ENCODE measurements at regions of chr1 and their contacts with region 1.

Region 1: GRCh38 chr1:42913426-42914091 is 45.1 kb downstream of the SLC2A1 start:
- DNase-seq: peak; percentile 76
- H3K4me3 Mint-ChIP-seq: no peak overlapping the region
- H3K27ac Mint-ChIP-seq: no peak overlapping the region
- H3K4me1 Mint-ChIP-seq: peaks cover 2% of the 10 kb centered on the region
- H3K27me3 Mint-ChIP-seq: no peaks in the 10 kb centered on the region

Region 2: DNA sequence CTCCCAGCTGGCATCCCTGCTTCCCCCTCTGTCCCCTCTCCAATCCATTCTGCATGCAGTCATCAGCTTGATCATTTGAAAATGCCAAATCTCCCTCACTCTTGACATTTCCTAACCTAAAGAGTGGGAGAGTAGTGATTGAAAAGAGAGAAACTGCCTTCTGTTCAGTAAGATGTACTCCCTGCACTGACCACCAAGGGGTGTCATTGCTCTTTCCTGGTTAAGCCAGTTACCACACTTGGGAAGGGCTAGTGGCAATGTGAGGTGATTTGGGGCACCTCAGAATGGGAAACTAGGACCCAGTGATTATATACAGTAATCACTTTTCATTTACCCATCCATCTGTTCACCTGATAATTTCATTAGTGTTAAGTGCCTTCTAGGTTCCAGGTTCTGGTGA is 135.7 kb before region 1 on chr1:
- CTCF ChIA-PET with region 1: interaction called, 13 read pairs
- intact Hi-C with region 1: loop called (anchors 1 kb)
- DNase-seq: peak; percentile 61
- H3K4me3 Mint-ChIP-seq: no peak overlapping the region
- H3K27ac Mint-ChIP-seq: no peak overlapping the region
- H3K4me1 Mint-ChIP-seq: peaks cover 6% of the 10 kb centered on the region
- H3K27me3 Mint-ChIP-seq: no peaks in the 10 kb centered on the region

Region 3: DNA sequence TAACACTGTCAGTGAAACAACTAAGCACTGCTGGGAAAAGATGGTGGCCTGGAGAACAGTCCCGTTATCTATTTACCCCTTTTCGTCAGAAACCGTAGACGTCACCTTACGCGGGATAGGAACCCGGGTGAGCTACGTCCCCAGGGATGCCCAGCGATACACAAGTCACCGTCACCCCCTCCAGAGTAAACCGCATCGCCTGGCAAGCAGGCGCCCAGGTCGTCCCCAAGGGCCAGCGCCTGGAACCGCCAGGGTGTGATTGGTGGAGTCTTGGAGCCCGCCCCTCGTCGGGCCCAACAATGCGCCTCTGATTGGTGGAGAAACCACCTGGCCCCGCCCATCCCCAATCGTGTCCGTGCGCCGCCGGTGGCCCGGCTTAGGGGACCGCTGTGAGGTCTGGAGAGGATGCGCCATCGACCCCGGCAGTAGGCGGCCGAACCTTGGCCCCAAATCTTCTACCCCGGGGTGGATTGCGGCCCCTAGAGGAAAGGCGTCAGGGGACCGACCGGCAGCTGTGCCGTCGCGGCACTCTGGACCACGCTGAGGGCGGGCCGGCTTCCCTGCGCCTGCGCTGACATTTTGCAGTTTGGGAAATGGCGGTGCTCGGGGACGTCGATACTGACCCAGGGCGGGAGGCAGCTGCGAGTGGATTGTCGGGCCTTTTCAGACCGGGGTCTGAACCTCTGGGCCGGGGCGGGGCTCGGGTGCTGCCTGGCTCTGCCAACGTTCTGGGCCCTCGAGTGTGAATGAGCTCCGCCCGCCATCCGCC is 10.7 kb after region 1 on chr1:
- CTCF ChIA-PET with region 1: interaction called, 11 read pairs
- intact Hi-C with region 1: no loop called
- DNase-seq: peak; percentile 95
- H3K4me3 Mint-ChIP-seq: peak overlapping the region; percentile 92
- H3K27ac Mint-ChIP-seq: peak overlapping the region; percentile 88
- H3K4me1 Mint-ChIP-seq: peaks cover 23% of the 10 kb centered on the region
- H3K27me3 Mint-ChIP-seq: no peaks in the 10 kb centered on the region

Region 4: DNA sequence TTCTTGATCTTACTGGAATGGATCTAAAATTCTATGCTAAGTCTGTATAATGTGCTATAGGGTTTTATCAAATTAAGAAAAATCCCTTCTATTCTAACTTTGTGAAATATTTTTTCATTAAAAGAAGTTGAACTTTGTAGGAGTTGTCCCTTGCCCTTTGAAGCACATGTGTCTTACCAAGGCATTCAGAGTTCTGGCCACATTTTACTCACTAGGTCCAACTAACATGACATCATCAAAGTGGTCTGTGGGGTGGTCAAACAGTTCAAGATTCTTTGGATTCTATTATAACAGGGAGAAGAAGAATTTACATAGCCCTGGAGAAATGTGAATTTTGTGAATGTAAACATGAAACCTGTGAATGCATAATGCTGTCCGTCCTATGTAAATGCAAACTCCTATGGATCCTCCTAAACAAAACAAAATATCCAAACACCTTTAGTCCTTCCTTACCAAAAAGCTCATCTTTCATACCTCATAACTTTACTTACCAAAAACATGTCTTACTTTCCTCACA is 169.9 kb after region 1 on chr1:
- CTCF ChIA-PET with region 1: interaction called, 441 read pairs
- intact Hi-C with region 1: no loop called
- DNase-seq: no peak
- H3K4me3 Mint-ChIP-seq: no peak overlapping the region
- H3K27ac Mint-ChIP-seq: no peak overlapping the region
- H3K4me1 Mint-ChIP-seq: no peaks in the 10 kb centered on the region
- H3K27me3 Mint-ChIP-seq: no peaks in the 10 kb centered on the region

Region 5: DNA sequence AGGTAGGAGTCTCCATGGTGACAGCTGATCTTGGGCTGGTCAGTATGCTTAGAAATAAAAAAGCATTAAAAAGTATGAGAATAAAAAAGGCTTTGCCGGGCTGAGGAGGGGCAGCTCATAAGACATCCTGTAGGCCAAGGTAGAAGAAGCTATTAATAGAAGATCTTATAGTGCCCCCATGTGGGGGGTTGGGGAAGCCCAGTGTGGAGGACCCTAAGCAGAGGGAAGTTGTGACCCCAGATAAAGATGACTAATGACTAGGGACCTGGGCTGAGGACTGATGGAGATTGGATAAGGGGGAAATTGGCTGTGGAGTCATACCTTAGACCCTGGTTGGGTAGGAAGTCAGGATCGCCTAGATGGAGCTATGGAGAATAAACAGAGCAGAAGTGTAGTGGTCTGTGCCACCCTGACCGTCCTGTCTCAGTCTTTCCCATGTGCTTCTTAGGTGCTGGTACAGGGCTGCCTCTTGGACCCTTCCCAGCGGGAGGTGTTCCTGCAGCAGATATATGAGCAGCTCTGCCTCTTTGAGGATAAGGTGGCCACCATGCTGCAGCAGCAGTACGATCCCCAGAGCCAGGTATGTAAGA is 501.2 kb after region 1 on chr1:
- CTCF ChIA-PET with region 1: no interaction called
- intact Hi-C with region 1: loop called (anchors 2 kb)
- DNase-seq: peak; percentile 73
- H3K4me3 Mint-ChIP-seq: no peak overlapping the region
- H3K27ac Mint-ChIP-seq: no peak overlapping the region
- H3K4me1 Mint-ChIP-seq: no peaks in the 10 kb centered on the region
- H3K27me3 Mint-ChIP-seq: no peaks in the 10 kb centered on the region

Region 6: GRCh38 chr1:43481491-43481890 is 567.9 kb after region 1 on chr1:
- CTCF ChIA-PET with region 1: no interaction called
- intact Hi-C with region 1: no loop called
- DNase-seq: no peak
- H3K4me3 Mint-ChIP-seq: no peak overlapping the region
- H3K27ac Mint-ChIP-seq: no peak overlapping the region
- H3K4me1 Mint-ChIP-seq: peaks cover 3% of the 10 kb centered on the region
- H3K27me3 Mint-ChIP-seq: peaks cover 7% of the 10 kb centered on the region

Measured in activated naive CD4-positive, alpha-beta T cell treated with anti-CD3 and anti-CD28 coated beads for 36 hours (primary cell).